MCF 10A (cell line): ENCODE measurements at regions of chr6 and their contacts with region 1.

Region 1: GRCh38 chr6:106556368-106556960 is 72.8 kb downstream of the RTN4IP1 start:
- DNase-seq: no peak
- H3K4me3 Mint-ChIP-seq: no peak overlapping the region
- H3K27ac Mint-ChIP-seq: no peak overlapping the region
- H3K4me1 Mint-ChIP-seq: peaks cover 23% of the 10 kb centered on the region
- H3K27me3 Mint-ChIP-seq: no peaks in the 10 kb centered on the region
- CTCF ChIP-seq: peak; percentile 38

Region 2: GRCh38 chr6:105402939-105403935 is 1153.2 kb before region 1 on chr6 and contains the start of gene PREP:
- CTCF ChIA-PET with region 1: no interaction called
- POLR2A ChIA-PET with region 1: no interaction called
- intact Hi-C with region 1: no loop called
- DNase-seq: peak; percentile 85
- H3K4me3 Mint-ChIP-seq: peak within 1 kb of the TSS; percentile 82
- H3K27ac Mint-ChIP-seq: peak within 1 kb of the TSS; percentile 65
- H3K4me1 Mint-ChIP-seq: peaks cover 28% of the 10 kb centered on the region
- H3K27me3 Mint-ChIP-seq: no peaks in the 10 kb centered on the region
- CTCF ChIP-seq: peak; percentile 60
- total RNA-seq, gene PREP: 57.8 and 67.6 TPM in 2 replicates

Region 3: DNA sequence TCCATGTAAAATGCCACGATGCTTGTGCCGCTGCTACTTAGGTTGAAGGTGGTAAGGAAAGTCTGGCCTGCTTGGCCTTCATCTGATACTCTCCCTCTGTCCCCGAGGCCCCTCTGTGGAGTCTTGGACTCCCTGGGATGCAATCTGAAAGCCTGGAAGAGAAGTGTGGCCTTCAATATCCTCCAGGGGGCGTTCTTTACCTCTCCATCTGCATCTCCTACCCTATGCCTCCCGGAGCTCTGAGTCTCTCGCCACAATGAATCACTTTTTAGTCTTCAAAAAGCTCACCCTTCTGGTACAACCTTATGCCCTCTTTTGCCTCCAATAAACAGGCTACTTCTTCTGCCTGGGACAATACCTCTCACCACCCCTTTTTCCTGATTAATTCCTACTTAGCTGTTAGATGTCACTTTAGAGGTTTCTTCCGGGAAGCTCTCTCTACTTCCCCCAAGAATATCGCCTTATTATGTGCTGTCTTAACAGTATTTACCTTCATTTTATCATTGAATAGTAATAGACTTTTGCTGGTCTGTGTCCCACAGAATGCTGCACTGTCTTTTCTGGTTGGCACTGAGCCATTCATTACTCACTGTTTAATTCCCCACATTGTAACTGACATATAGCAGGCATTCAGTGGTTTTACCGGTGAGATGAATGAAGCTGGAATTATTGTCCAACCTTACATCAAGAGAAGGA is 217.0 kb before region 1 on chr6:
- CTCF ChIA-PET with region 1: interaction called, 18 read pairs
- POLR2A ChIA-PET with region 1: no interaction called
- intact Hi-C with region 1: loop called (anchors 2 kb)
- DNase-seq: peak; percentile 87
- H3K4me3 Mint-ChIP-seq: peak overlapping the region; percentile 61
- H3K27ac Mint-ChIP-seq: peak overlapping the region; percentile 43
- H3K4me1 Mint-ChIP-seq: peaks cover 11% of the 10 kb centered on the region
- H3K27me3 Mint-ChIP-seq: no peaks in the 10 kb centered on the region
- CTCF ChIP-seq: peak; percentile 68

Region 4: GRCh38 chr6:106477790-106478189 is 78.7 kb before region 1 on chr6:
- CTCF ChIA-PET with region 1: interaction called, 4 read pairs
- POLR2A ChIA-PET with region 1: interaction called, 20 read pairs
- intact Hi-C with region 1: no loop called
- DNase-seq: peak; percentile 66
- H3K4me3 Mint-ChIP-seq: no peak overlapping the region
- H3K27ac Mint-ChIP-seq: no peak overlapping the region
- H3K4me1 Mint-ChIP-seq: peaks cover 13% of the 10 kb centered on the region
- H3K27me3 Mint-ChIP-seq: no peaks in the 10 kb centered on the region
- CTCF ChIP-seq: no peak

Region 5: DNA sequence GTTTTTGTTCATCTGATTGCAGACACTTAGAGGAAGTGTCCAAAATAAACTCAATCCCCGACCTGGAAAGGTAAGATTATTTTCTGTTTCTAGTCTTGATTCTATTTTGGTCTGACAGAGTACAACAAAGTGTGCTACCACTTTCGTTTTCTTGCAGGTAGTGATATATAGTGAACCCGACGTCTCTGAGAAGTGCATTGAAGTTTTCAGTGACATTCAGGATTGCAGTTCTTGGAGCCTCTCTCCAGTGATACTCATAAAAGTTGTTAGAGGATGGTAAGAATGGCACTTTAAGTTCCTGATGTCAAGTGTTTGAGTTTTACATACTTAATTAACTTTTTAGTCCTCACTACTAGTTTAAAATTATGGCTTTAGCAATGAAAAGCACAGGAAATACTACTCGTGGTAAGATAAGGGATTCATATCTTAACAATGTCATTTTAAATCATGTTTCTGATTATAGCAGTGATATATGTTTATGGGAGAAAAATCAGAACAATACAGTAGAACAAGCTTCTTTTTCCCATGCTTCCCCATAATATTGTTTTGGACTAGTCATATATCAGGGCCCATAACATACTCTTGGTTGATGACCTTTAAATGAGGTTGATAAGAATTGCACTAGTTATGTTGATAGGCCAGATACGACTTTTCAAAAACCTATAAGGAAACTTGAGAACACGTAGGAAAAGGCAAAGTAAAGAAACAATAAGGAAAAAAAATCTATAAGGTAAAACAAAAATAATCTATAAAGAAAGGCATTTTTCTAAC is 31.2 kb before region 1 on chr6:
- CTCF ChIA-PET with region 1: interaction called, 5 read pairs
- POLR2A ChIA-PET with region 1: interaction called, 33 read pairs
- intact Hi-C with region 1: no loop called
- DNase-seq: peak; percentile 49
- H3K4me3 Mint-ChIP-seq: peak overlapping the region; percentile 69
- H3K27ac Mint-ChIP-seq: peak overlapping the region; percentile 96
- H3K4me1 Mint-ChIP-seq: peaks cover 43% of the 10 kb centered on the region
- H3K27me3 Mint-ChIP-seq: no peaks in the 10 kb centered on the region
- CTCF ChIP-seq: no peak

Region 6: GRCh38 chr6:106539936-106540335 is 16.5 kb before region 1 on chr6:
- CTCF ChIA-PET with region 1: interaction called, 4 read pairs
- POLR2A ChIA-PET with region 1: interaction called, 10 read pairs
- intact Hi-C with region 1: no loop called
- DNase-seq: no peak
- H3K4me3 Mint-ChIP-seq: no peak overlapping the region
- H3K27ac Mint-ChIP-seq: no peak overlapping the region
- H3K4me1 Mint-ChIP-seq: peaks cover 21% of the 10 kb centered on the region
- H3K27me3 Mint-ChIP-seq: no peaks in the 10 kb centered on the region
- CTCF ChIP-seq: no peak

Region 7: DNA sequence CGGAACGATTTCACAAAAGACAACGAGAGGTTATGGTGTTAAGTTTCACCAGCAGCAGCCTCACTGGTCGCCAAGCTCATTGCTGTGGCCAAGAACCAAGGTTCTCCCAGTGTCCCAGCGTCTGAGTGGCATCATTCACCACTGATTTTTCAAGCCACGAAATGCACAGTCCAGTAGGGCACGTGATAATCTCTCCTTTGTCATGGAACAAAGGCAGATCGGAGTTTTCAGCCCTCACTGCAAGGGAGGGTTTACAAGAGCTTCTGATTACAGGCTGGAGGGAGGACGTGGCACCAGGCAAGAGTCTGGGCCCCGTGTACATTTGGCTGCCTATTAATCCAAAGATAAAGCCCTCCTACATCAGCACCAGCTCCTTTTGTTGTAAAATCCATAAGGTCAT is 416.0 kb after region 1 on chr6:
- CTCF ChIA-PET with region 1: no interaction called
- POLR2A ChIA-PET with region 1: no interaction called
- intact Hi-C with region 1: no loop called
- DNase-seq: no peak
- H3K4me3 Mint-ChIP-seq: no peak overlapping the region
- H3K27ac Mint-ChIP-seq: no peak overlapping the region
- H3K4me1 Mint-ChIP-seq: no peaks in the 10 kb centered on the region
- H3K27me3 Mint-ChIP-seq: no peaks in the 10 kb centered on the region
- CTCF ChIP-seq: no peak